ENCODE measurements at regions of chrX and their contacts with region 1.

Region 1: DNA sequence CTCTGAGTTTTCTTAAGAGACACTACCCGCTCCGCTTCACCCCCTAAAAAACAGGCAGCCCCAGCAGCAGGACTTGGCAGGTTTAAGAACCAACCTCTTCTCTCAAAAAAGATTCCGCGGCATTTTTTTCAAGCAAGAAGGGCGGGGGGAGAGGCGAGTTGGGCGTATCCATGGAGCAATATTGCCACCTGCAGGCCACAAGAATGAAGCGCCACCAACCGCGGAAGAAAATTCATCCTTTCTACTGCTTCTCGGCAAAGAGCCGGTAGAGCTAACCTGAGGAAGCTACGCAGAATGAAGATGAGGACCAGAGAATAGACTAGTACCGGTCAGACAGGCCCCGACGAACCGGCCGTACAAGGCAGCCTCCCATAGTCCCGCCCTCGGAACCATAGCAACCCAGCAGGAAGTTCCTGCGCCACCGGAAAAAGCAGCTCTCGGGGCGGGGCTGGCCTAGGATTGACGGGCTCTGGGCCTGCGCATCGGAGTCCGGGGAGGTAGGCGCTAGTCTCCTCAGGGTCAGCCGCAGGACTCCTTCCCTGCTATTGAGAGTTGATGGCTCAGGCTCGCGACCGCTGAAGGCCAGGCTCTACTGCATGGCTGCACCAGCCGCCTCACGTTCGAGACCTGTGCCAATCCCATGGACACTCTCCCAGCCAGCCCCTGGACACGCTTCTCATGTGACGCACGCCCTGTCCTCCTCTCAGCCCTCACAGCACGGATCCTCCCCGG is 76.9 kb downstream of the MAGED4 start:
- DNase-seq: peak; percentile 86 to 91 (median 91)
- H3K4me3 ChIP-seq: peak overlapping the region in 1 of 2 donors; percentile 88
- H3K4me3 Mint-ChIP-seq: peak overlapping the region; percentile 95 to 100 (median 98)
- H3K27ac ChIP-seq: peak overlapping the region; percentile 71
- H3K27ac Mint-ChIP-seq: peak overlapping the region; percentile 98 to 100 (median 99)
- H3K4me1 ChIP-seq: peaks cover 5% of the 10 kb centered on the region
- H3K4me1 Mint-ChIP-seq: peaks cover 2 to 22% (median 12%) of the 10 kb centered on the region in 4 donors
- H3K27me3 ChIP-seq: no peaks in the 10 kb centered on the region
- H3K27me3 Mint-ChIP-seq: peaks cover 6% of the 10 kb centered on the region in 2 donors

Region 2: GRCh38 chrX:50691820-50692219 is 1569.8 kb before region 1 on chrX:
- CTCF ChIA-PET with region 1: no interaction called
- POLR2A ChIA-PET with region 1: no interaction called
- intact Hi-C with region 1: loop called (anchors 5 kb)
- DNase-seq: peak in 4 of 5 donors; percentile 32 to 44 (median 36)
- H3K4me3 ChIP-seq: no peak overlapping the region
- H3K4me3 Mint-ChIP-seq: no peak overlapping the region
- H3K27ac ChIP-seq: no peak overlapping the region
- H3K27ac Mint-ChIP-seq: no peak overlapping the region
- H3K4me1 ChIP-seq: no peaks in the 10 kb centered on the region
- H3K4me1 Mint-ChIP-seq: no peaks in the 10 kb centered on the region
- H3K27me3 ChIP-seq: no peaks in the 10 kb centered on the region
- H3K27me3 Mint-ChIP-seq: peaks cover 7% of the 10 kb centered on the region in 2 donors

Region 3: DNA sequence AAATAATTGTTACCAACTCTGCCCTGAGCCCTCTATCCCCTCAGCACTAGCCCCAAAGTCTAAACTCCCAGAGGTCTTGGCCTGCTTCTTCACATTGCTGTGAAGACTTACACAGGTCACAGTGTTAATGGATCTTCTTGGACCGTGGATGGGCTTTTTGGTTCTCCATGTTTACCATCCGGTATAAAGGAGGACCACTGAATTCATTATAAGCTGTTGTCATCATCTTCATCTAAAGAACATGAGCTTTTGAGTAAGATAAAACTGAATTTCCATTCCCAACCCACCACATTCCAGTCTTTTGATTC is 773.7 kb before region 1 on chrX:
- CTCF ChIA-PET with region 1: no interaction called
- POLR2A ChIA-PET with region 1: no interaction called
- intact Hi-C with region 1: loop called (anchors 5 kb)
- DNase-seq: no peak
- H3K4me3 ChIP-seq: no peak overlapping the region
- H3K4me3 Mint-ChIP-seq: no peak overlapping the region
- H3K27ac ChIP-seq: no peak overlapping the region
- H3K27ac Mint-ChIP-seq: no peak overlapping the region
- H3K4me1 ChIP-seq: no peaks in the 10 kb centered on the region
- H3K4me1 Mint-ChIP-seq: no peaks in the 10 kb centered on the region
- H3K27me3 ChIP-seq: no peaks in the 10 kb centered on the region
- H3K27me3 Mint-ChIP-seq: peaks cover 0 to 3% of the 10 kb centered on the region in 2 donors

Region 4: GRCh38 chrX:51614353-51615012 is 647.1 kb before region 1 on chrX:
- CTCF ChIA-PET with region 1: interaction called, 4 read pairs
- POLR2A ChIA-PET with region 1: no interaction called
- intact Hi-C with region 1: loop called (anchors 2 kb)
- DNase-seq: peak in 4 of 5 donors; percentile 7 to 19 (median 12)
- H3K4me3 ChIP-seq: no peak overlapping the region
- H3K4me3 Mint-ChIP-seq: no peak overlapping the region
- H3K27ac ChIP-seq: no peak overlapping the region
- H3K27ac Mint-ChIP-seq: no peak overlapping the region
- H3K4me1 ChIP-seq: no peaks in the 10 kb centered on the region
- H3K4me1 Mint-ChIP-seq: peaks cover 0 to 5% (median 3%) of the 10 kb centered on the region in 4 donors
- H3K27me3 ChIP-seq: no peaks in the 10 kb centered on the region
- H3K27me3 Mint-ChIP-seq: peaks cover 14 to 28% of the 10 kb centered on the region in 2 donors

Region 5: GRCh38 chrX:52284865-52285264 is 23.2 kb after region 1 on chrX:
- CTCF ChIA-PET with region 1: no interaction called
- POLR2A ChIA-PET with region 1: no interaction called
- intact Hi-C with region 1: no loop called
- DNase-seq: no peak
- H3K4me3 ChIP-seq: no peak overlapping the region
- H3K4me3 Mint-ChIP-seq: no peak overlapping the region
- H3K27ac ChIP-seq: no peak overlapping the region
- H3K27ac Mint-ChIP-seq: no peak overlapping the region
- H3K4me1 ChIP-seq: no peaks in the 10 kb centered on the region
- H3K4me1 Mint-ChIP-seq: no peaks in the 10 kb centered on the region
- H3K27me3 ChIP-seq: no peaks in the 10 kb centered on the region
- H3K27me3 Mint-ChIP-seq: peaks cover 2 to 6% of the 10 kb centered on the region in 2 donors

Region 6: DNA sequence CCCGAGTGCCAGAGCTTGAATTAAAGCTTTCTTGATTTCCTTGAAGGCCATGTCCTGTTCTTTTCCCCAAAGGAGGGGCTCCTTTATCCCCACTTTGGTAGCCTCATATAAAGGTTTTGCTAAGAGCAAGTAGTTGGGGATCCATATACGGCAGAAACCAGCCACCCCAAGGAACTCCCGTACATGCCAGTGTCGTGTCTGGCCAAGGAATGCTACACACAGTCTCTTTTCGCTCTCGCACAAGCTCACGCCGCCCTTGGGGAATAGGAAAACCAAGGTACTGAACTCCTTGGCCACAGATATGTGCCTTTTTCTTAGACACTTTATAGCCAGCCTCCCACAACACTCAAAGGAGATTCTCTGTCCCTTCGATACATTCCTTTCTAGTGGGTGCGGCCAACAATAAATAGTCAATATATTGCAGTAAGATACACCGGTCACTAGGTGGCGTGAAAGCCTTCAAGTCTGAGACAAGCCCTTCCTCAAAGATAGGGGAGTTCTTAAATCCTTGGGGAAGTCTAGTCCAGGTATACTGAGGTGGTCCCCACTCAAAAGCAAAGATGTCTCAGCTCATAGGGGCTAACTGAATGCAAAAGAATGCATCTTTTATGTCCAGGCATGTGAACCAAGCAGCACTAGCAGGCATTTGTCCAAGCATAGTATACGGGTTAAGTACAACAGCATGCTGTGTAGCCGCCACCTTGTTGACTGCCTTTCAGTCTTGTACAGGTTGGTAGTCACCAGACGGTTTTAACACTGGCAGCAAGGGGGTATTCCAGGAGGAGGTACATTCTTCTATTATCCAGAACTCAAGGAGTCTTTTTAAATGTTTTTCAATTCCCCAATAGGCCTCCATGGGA is 313.0 kb after region 1 on chrX:
- CTCF ChIA-PET with region 1: no interaction called
- POLR2A ChIA-PET with region 1: no interaction called
- intact Hi-C with region 1: no loop called
- DNase-seq: peak in 4 of 5 donors; percentile 26 to 43 (median 30)
- H3K4me3 ChIP-seq: no peak overlapping the region
- H3K4me3 Mint-ChIP-seq: no peak overlapping the region
- H3K27ac ChIP-seq: no peak overlapping the region
- H3K27ac Mint-ChIP-seq: peak overlapping the region in 1 of 7 donors; percentile 66
- H3K4me1 ChIP-seq: no peaks in the 10 kb centered on the region
- H3K4me1 Mint-ChIP-seq: peaks cover 0 to 4% (median 2%) of the 10 kb centered on the region in 4 donors
- H3K27me3 ChIP-seq: no peaks in the 10 kb centered on the region
- H3K27me3 Mint-ChIP-seq: no peaks in the 10 kb centered on the region